A673 (cell line): ENCODE measurements at regions of chr18 and their contacts with region 1.

Region 1: GRCh38 chr18:35756506-35757117 is 175.1 kb downstream of the GALNT1 start:
- DNase-seq: peak; percentile 62
- H3K4me3 ChIP-seq: no peak overlapping the region
- H3K27ac ChIP-seq: no peak overlapping the region
- H3K4me1 ChIP-seq: no peaks in the 10 kb centered on the region
- H3K27me3 ChIP-seq: peaks cover 24% of the 10 kb centered on the region
- CTCF ChIP-seq: peak; percentile 81

Region 2: GRCh38 chr18:35386600-35387351 is 369.8 kb before region 1 on chr18:
- CTCF ChIA-PET with region 1: no interaction called
- POLR2A ChIA-PET with region 1: no interaction called
- intact Hi-C with region 1: loop called (anchors 5 kb)
- DNase-seq: peak; percentile 80
- H3K4me3 ChIP-seq: no peak overlapping the region
- H3K27ac ChIP-seq: no peak overlapping the region
- H3K4me1 ChIP-seq: no peaks in the 10 kb centered on the region
- H3K27me3 ChIP-seq: peaks cover 51% of the 10 kb centered on the region
- CTCF ChIP-seq: peak; percentile 89

Region 3: GRCh38 chr18:35407871-35408481 is 348.6 kb before region 1 on chr18:
- CTCF ChIA-PET with region 1: no interaction called
- POLR2A ChIA-PET with region 1: no interaction called
- intact Hi-C with region 1: loop called (anchors 5 kb)
- DNase-seq: peak; percentile 80
- H3K4me3 ChIP-seq: no peak overlapping the region
- H3K27ac ChIP-seq: no peak overlapping the region
- H3K4me1 ChIP-seq: no peaks in the 10 kb centered on the region
- H3K27me3 ChIP-seq: peaks cover 5% of the 10 kb centered on the region
- CTCF ChIP-seq: peak; percentile 84

Region 4: GRCh38 chr18:35949903-35950627 is 193.5 kb after region 1 on chr18:
- CTCF ChIA-PET with region 1: no interaction called
- POLR2A ChIA-PET with region 1: no interaction called
- intact Hi-C with region 1: loop called (anchors 1 kb)
- DNase-seq: peak; percentile 77
- H3K4me3 ChIP-seq: peak overlapping the region; percentile 41
- H3K27ac ChIP-seq: no peak overlapping the region
- H3K4me1 ChIP-seq: no peaks in the 10 kb centered on the region
- H3K27me3 ChIP-seq: no peaks in the 10 kb centered on the region
- CTCF ChIP-seq: peak; percentile 86

Region 5: GRCh38 chr18:36284671-36285295 is 528.2 kb after region 1 on chr18:
- CTCF ChIA-PET with region 1: interaction called, 12 read pairs
- POLR2A ChIA-PET with region 1: no interaction called
- intact Hi-C with region 1: loop called (anchors 2 kb)
- DNase-seq: peak; percentile 73
- H3K4me3 ChIP-seq: no peak overlapping the region
- H3K27ac ChIP-seq: no peak overlapping the region
- H3K4me1 ChIP-seq: no peaks in the 10 kb centered on the region
- H3K27me3 ChIP-seq: peaks cover 30% of the 10 kb centered on the region
- CTCF ChIP-seq: peak; percentile 84

Region 6: GRCh38 chr18:36757081-36757480 is 1000.5 kb after region 1 on chr18:
- CTCF ChIA-PET with region 1: no interaction called
- POLR2A ChIA-PET with region 1: no interaction called
- intact Hi-C with region 1: loop called (anchors 5 kb)
- DNase-seq: peak; percentile 58
- H3K4me3 ChIP-seq: no peak overlapping the region
- H3K27ac ChIP-seq: no peak overlapping the region
- H3K4me1 ChIP-seq: no peaks in the 10 kb centered on the region
- H3K27me3 ChIP-seq: peaks cover 3% of the 10 kb centered on the region
- CTCF ChIP-seq: peak; percentile 71